AG04449 (cell line): ENCODE measurements at regions of chr12 and their contacts with region 1.

Region 1: DNA sequence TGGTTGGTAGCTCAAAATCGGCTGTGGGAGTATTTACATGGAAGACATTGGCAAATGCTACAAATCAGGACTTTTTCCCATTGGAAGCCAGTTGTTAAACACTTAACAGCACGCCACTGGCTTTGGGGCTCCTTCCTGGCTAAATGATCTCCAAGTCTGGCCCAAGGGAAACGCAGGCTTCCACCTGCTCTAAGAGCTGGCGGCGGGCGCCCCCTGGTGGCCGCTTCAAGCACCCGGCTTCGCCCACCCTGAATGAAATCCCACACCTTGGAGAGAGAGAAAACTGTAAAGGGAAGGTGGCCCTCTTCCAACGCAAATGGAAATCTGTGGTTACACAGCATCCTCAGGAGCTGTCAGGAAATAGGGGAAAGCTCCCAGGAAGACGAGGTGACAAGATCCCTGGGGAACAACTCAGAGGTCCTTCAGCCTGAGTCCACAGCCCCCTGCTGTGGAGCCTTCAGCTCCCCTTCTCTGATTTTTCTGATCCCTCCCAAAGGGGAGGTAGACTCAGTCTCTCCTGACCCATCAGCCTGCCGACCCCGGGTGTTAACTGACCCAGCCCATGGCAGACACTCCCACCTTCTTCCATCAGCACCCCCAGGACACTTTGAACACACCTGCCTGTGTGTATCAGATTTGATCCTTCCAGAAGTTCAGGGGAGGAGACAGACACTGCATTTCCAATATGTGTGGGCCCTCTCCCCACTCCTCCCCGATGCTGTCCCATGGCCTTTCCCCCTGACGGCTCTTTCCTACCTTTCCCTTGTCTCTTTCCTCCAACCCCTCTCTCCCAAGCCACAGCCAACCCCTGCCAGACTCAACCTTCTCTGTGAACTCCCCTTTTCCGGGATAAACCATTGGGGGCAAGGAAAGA is 15.4 kb downstream of the SELPLG start:
- DNase-seq: peak; percentile 17
- H3K4me3 ChIP-seq: no peak overlapping the region
- CTCF ChIP-seq: peak; percentile 91

Region 2: GRCh38 chr12:108542320-108542719 is 76.0 kb before region 1 on chr12:
- CTCF ChIA-PET with region 1: interaction called, 14 read pairs
- POLR2A ChIA-PET with region 1: no interaction called
- DNase-seq: no peak
- H3K4me3 ChIP-seq: no peak overlapping the region
- CTCF ChIP-seq: no peak

Region 3: GRCh38 chr12:108562348-108563135 is 55.8 kb before region 1 on chr12 and contains the start of gene ISCU:
- CTCF ChIA-PET with region 1: interaction called, 1,115 read pairs
- POLR2A ChIA-PET with region 1: interaction called, 4 read pairs
- DNase-seq: peak; percentile 65
- H3K4me3 ChIP-seq: peak within 1 kb of the TSS; percentile 97
- CTCF ChIP-seq: no peak

Region 4: GRCh38 chr12:108589028-108589839 is 29.1 kb before region 1 on chr12:
- CTCF ChIA-PET with region 1: interaction called, 60 read pairs
- POLR2A ChIA-PET with region 1: interaction called, 3 read pairs
- DNase-seq: no peak
- H3K4me3 ChIP-seq: no peak overlapping the region
- CTCF ChIP-seq: no peak

Region 5: DNA sequence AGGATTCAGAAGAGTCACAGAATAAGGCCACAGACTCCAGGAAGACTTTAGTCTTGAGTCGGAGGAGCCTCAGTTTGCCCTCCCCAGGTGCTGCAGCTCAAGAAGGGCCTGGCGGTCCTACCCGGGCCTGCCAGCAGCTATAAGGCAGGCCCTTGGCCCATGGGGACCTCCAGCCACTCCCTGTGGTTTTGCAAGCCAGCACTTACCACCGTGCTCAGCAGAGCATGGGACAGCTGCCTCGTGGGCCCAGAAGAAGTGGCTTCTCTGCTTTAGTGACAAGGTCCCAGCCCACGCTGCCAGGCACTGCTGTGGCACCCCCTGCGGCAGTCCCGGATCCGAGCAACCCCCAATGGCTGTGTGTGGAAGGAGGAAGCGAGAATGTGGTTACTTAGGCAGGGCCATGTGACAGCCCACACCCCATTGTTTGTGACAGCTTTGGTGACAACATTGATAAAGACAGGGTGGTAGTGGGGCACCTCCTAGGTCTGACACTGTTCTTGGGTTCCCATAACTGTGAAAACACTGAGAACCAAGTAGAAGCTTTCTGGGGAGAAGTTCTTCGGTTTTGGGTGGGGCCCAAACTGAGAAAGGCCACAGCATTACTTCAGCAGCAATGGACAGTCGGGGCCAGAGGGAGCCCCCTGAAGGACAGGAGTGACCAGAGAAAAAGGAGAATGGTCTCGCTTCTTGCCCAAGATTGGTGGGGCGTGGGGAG is 15.4 kb after region 1 on chr12 and contains the start of gene SELPLG:
- CTCF ChIA-PET with region 1: interaction called, 84 read pairs
- POLR2A ChIA-PET with region 1: interaction called, 4 read pairs
- DNase-seq: no peak
- H3K4me3 ChIP-seq: no peak within 1 kb of the TSS
- CTCF ChIP-seq: no peak

Region 6: GRCh38 chr12:108649669-108650068 is 31.4 kb after region 1 on chr12:
- CTCF ChIA-PET with region 1: interaction called, 13 read pairs
- POLR2A ChIA-PET with region 1: no interaction called
- DNase-seq: peak; percentile 59
- H3K4me3 ChIP-seq: no peak overlapping the region
- CTCF ChIP-seq: no peak